PC-9 (cell line): ENCODE measurements at regions of chr4 and their contacts with region 1.

Region 1: DNA sequence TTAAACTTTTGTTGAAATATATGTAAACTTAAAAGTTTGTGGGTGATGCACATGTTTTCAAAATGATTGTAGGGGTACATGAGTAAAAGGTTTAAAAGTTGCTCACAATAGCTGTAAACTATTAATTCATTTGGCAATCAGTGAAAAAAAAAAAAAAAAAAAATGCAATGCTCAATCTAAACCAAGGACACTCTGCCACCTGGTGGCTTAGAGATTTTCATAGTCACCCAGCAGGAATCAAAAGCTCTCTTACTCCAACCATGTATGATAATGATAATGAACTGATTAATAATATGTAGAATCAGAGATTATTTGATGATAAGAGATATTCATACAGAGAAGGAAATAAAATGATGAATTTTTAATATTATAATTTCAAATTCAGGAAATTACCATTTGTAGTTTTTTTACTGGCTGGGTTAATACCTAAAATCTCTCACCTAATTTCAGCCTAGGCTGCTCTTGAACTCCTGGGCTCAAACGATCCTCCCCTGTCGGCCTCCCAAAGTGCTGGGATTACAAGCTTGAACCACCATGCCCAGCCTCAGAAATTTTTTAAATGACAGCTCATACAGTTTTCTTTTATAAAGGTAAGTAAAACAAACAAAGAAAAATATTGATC is 46.9 kb upstream of the SLC25A4 start:
- DNase-seq: peak in 1 of 2 experiments; percentile 20
- H3K4me3 ChIP-seq: no peak overlapping the region
- H3K27ac ChIP-seq: no peak overlapping the region
- H3K4me1 ChIP-seq: no peaks in the 10 kb centered on the region
- H3K27me3 ChIP-seq: no peaks in the 10 kb centered on the region
- CTCF ChIP-seq: peak; percentile 71

Region 2: DNA sequence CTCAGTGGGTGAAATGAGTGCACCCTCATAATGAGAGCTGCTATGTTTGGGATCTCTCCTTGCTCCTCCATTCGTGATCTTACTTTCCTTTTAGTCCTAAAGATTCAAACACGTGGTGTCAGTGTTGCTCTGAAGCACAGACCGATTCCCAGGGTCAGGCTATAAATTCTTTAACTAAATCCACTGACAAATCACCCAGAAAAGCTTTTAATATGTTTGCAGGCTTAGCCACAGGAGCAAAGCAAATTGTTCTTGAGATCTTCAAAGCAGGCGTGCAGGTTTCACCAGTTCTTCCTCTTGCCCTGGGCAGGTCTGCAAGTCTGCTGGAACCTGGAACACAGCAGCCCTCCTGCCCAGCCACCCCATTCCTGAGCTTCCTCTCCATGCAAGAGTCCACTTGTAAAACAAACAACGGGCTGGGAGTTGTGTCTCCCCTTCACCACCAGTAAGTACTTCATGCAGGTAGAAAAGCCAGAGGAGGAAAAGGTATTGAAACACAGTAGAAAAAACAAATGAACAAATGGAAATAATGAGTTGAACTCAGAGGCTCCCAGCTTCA is 808.4 kb before region 1 on chr4:
- CTCF ChIA-PET with region 1: interaction called, 8 read pairs
- POLR2A ChIA-PET with region 1: no interaction called
- intact Hi-C with region 1: loop called (anchors 1 kb)
- DNase-seq: peak; percentile 76 to 93
- H3K4me3 ChIP-seq: peak overlapping the region; percentile 27; the same call in 1 of the 2 replicates
- H3K27ac ChIP-seq: peak overlapping the region; percentile 69
- H3K4me1 ChIP-seq: peaks cover 28% of the 10 kb centered on the region
- H3K27me3 ChIP-seq: no peaks in the 10 kb centered on the region
- CTCF ChIP-seq: peak; percentile 25; the same call in 1 of the 2 replicates

Region 3: GRCh38 chr4:184538023-184538599 is 558.0 kb before region 1 on chr4:
- CTCF ChIA-PET with region 1: no interaction called
- POLR2A ChIA-PET with region 1: no interaction called
- intact Hi-C with region 1: loop called (anchors 2 kb)
- DNase-seq: peak; percentile 65 to 71
- H3K4me3 ChIP-seq: peak overlapping the region; percentile 67
- H3K27ac ChIP-seq: peak overlapping the region; percentile 66
- H3K4me1 ChIP-seq: no peaks in the 10 kb centered on the region; the same call in 1 of the 2 replicates
- H3K27me3 ChIP-seq: no peaks in the 10 kb centered on the region
- CTCF ChIP-seq: peak; percentile 67

Region 4: DNA sequence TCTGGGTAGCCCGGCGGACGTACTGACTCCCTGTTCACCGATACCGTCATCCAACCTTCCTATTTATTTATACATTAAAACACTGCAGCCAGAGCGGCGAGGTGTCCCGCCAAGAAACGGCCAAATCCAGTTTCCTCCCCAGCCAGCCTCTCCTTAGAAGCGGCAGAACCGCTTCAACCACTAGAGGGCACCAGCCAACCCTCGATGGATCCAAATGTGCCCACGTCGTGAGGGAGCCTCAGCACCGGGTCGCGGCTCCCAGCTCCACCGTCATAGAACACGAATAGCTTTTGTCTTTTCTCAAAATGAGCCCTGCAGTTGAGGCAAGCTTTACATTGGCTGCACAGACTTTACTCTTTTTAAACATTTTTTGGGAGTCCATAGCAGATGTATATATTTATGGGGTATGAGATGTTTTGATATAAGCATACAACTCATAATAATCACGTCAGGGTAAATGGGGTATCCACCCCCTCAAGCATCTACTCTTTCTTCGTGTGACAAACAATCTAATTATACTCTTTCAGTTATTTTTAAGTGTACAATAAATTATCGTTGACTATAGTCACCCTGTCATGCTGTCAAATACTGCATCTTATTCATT is 90.8 kb before region 1 on chr4:
- CTCF ChIA-PET with region 1: no interaction called
- POLR2A ChIA-PET with region 1: no interaction called
- intact Hi-C with region 1: loop called (anchors 2 kb)
- DNase-seq: peak in 1 of 2 experiments; percentile 73
- H3K4me3 ChIP-seq: no peak overlapping the region
- H3K27ac ChIP-seq: no peak overlapping the region
- H3K4me1 ChIP-seq: no peaks in the 10 kb centered on the region
- H3K27me3 ChIP-seq: no peaks in the 10 kb centered on the region
- CTCF ChIP-seq: peak; percentile 83

Region 5: GRCh38 chr4:185039508-185040273 is 56.5 kb before region 1 on chr4:
- CTCF ChIA-PET with region 1: interaction called, 9 read pairs
- POLR2A ChIA-PET with region 1: interaction called, 4 read pairs
- intact Hi-C with region 1: loop called (anchors 5 kb)
- DNase-seq: peak; percentile 37
- H3K4me3 ChIP-seq: no peak overlapping the region; the same call in 1 of the 2 replicates
- H3K27ac ChIP-seq: peak overlapping the region; percentile 46; the same call in 1 of the 2 replicates
- H3K4me1 ChIP-seq: no peaks in the 10 kb centered on the region
- H3K27me3 ChIP-seq: no peaks in the 10 kb centered on the region
- CTCF ChIP-seq: peak; percentile 79

Region 6: GRCh38 chr4:185134307-185134869 is 38.2 kb after region 1 on chr4:
- CTCF ChIA-PET with region 1: interaction called, 7 read pairs
- POLR2A ChIA-PET with region 1: no interaction called
- intact Hi-C with region 1: loop called (anchors 1 kb)
- DNase-seq: no peak
- H3K4me3 ChIP-seq: no peak overlapping the region
- H3K27ac ChIP-seq: no peak overlapping the region
- H3K4me1 ChIP-seq: no peaks in the 10 kb centered on the region
- H3K27me3 ChIP-seq: no peaks in the 10 kb centered on the region
- CTCF ChIP-seq: peak; percentile 87

Region 7: DNA sequence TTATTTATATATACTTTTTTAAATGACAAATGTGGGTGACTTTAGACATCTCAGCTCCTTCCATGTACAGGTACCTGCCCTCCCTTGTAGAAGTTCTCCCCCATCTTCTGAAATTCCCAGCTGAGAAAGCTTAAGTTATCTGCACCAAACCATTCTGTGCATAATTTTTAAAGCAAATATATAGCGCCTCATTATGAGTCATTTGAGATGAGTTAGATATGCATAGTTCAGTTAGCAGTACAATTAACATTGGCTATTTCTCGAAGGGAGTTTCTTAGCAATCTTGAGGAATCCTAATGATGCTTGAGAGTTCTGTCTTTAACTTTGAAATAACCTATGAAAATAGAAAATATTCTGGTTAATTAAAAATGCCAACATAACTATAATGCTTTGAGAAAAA is 349.1 kb after region 1 on chr4:
- CTCF ChIA-PET with region 1: no interaction called
- POLR2A ChIA-PET with region 1: no interaction called
- intact Hi-C with region 1: no loop called
- DNase-seq: no peak
- H3K4me3 ChIP-seq: no peak overlapping the region
- H3K27ac ChIP-seq: no peak overlapping the region
- H3K4me1 ChIP-seq: no peaks in the 10 kb centered on the region
- H3K27me3 ChIP-seq: no peaks in the 10 kb centered on the region
- CTCF ChIP-seq: no peak